AG04450 (cell line): ENCODE measurements at regions of chr5 and their contacts with region 1.

Region 1: DNA sequence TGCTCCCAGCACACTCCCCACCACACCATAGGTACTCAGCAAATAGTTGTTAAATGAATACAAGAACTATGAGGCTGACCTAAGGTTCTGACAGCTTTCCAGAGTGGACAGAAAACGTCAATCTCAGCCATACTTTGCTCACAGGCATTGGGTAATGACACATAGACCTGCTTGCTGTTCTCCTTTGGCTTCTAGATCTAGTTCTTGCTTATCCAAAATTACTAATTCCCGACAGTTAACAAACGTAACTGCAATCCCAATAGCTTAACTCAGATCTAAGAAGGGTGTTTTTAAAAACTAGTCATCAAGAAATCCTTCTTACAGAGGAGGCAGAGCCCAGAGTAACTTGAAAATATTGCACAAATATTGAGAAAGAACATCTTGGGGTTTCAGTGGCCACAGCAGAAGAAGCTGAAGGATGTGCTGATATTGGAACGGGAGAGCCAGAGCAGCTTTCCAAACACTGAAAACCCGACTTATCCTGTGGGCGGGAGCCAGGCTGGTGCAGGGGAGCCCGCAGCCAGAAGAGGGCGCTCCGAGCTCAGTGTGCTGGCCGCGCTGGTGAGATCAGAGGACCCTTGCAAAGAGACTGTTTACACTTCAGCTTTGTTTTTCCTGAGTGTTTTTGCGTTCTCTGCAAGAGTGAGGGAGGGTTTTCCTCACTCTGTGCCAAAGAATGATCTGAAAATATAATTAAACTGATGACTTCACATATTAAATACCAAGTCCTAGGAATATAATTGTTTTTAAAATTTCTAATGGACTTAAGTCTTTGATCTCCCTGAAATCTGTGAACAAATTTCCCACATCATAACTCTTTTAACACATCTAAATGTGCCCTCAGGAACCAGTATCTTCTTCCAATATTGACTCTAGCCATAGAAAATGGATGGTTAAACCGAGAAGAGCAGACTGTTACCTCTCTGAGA is 30.3 kb downstream of the FGF1 start:
- DNase-seq: peak; percentile 72
- H3K4me3 ChIP-seq: no peak overlapping the region
- H3K27ac ChIP-seq: no peak overlapping the region
- H3K27me3 ChIP-seq: no peaks in the 10 kb centered on the region
- CTCF ChIP-seq: peak; percentile 99

Region 2: DNA sequence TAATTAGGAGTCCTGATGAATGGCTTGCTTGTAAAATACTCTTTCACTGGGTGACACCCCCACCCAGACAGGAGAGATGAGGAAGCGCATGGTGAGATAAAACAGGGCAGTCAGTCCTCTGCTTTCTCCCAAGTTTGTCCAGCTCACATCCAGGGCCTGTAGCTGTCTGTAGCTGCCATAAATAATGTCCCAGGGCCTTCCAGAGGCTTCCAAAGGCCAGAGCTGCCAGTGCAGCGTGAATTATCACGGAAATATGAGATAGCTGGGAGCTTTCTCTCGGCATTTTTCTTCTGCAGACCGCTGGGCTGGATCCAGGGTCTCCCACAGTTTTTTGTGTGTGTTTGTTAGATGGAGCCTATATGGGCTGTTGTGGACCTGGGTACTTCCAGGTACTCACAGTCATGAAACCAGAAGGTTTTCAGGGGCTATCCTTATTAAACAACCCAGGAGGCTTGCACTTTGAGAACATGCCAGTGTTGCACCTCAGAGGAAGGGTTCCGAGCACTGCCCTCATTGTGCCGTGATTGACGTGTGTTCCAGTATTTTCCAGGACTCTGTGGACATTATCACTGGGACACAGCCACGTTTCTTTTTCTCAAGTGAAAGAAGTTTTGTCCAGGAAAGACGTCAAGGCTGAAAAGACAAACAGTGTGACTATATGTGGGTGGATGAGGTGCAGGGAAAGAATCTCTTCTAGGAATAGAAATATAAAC is 87.2 kb before region 1 on chr5:
- CTCF ChIA-PET with region 1: no interaction called
- POLR2A ChIA-PET with region 1: no interaction called
- DNase-seq: peak; percentile 21
- H3K4me3 ChIP-seq: no peak overlapping the region
- H3K27ac ChIP-seq: peak overlapping the region; percentile 68
- H3K27me3 ChIP-seq: no peaks in the 10 kb centered on the region
- CTCF ChIP-seq: no peak

Region 3: DNA sequence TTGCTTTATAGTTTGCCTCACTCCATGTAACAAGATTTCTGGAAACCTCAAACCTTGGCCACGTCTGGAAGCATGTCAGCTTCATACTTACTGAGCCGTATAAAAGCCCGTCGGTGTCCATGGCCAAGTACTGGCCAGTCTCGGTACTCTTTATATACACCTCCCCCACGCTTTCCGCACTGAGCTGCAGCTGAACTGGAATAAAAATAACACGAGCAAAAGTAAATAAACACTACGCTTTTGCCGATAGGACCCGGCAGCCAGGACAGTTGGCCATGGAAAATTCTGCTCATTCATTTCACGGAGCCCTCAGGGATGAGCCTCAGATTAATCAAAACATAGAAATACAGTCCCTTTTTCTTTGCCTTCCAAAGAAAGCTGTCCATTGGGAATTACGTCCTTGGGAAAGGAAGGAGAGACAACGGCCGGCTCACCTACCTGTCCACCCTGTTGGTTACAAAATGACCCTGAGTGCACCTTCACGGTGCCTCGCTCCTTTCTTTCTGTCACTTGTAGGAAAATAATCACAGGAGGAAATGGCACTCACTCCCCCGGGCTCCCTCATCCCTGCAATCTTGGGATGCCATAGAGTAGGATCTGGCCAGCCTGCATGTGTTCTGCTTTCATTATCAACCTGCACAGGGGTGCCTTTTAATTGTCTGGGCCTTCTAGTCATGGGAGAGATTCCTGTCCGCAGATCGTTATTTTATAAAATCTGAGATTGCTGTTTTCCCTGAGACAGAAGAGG is 54.8 kb before region 1 on chr5:
- CTCF ChIA-PET with region 1: interaction called, 15 read pairs
- POLR2A ChIA-PET with region 1: no interaction called
- DNase-seq: peak; percentile 69
- H3K4me3 ChIP-seq: peak overlapping the region; percentile 41
- H3K27ac ChIP-seq: peak overlapping the region; percentile 72
- H3K27me3 ChIP-seq: no peaks in the 10 kb centered on the region
- CTCF ChIP-seq: no peak

Region 4: DNA sequence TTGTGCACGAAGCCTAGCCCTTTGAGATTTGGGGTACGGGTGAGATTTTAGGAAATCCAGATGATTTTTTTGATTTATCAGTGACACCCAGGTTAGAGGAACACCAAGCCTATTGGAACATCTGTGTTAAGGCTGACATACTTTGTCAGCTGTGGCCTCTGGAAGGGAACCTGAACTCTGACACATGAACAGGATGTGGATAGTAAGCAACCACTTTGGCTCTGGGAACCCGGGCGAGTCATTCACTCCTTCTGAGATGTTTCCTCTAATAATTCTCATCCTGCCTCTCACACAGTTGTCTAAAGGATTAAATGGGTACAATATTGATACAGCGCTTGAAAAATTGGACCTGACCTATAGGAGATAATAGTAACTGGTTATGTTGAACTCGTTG is 37.5 kb before region 1 on chr5:
- CTCF ChIA-PET with region 1: interaction called, 18 read pairs
- POLR2A ChIA-PET with region 1: no interaction called
- DNase-seq: peak; percentile 43
- H3K4me3 ChIP-seq: no peak overlapping the region
- H3K27ac ChIP-seq: no peak overlapping the region
- H3K27me3 ChIP-seq: no peaks in the 10 kb centered on the region
- CTCF ChIP-seq: no peak

Region 5: GRCh38 chr5:142674531-142675469 is 19.2 kb after region 1 on chr5:
- CTCF ChIA-PET with region 1: interaction called, 57 read pairs
- POLR2A ChIA-PET with region 1: interaction called, 3 read pairs
- DNase-seq: peak; percentile 41
- H3K4me3 ChIP-seq: no peak overlapping the region
- H3K27ac ChIP-seq: peak overlapping the region; percentile 57
- H3K27me3 ChIP-seq: peaks cover 2% of the 10 kb centered on the region
- CTCF ChIP-seq: no peak

Region 6: GRCh38 chr5:142690667-142691066 is 35.1 kb after region 1 on chr5:
- CTCF ChIA-PET with region 1: interaction called, 36 read pairs
- POLR2A ChIA-PET with region 1: no interaction called
- DNase-seq: no peak
- H3K4me3 ChIP-seq: no peak overlapping the region
- H3K27ac ChIP-seq: no peak overlapping the region
- H3K27me3 ChIP-seq: no peaks in the 10 kb centered on the region
- CTCF ChIP-seq: no peak

Region 7: GRCh38 chr5:142881076-142881783 is 225.6 kb after region 1 on chr5:
- CTCF ChIA-PET with region 1: interaction called, 13 read pairs
- POLR2A ChIA-PET with region 1: no interaction called
- DNase-seq: peak; percentile 65
- H3K4me3 ChIP-seq: no peak overlapping the region
- H3K27ac ChIP-seq: no peak overlapping the region
- H3K27me3 ChIP-seq: peaks cover 4% of the 10 kb centered on the region
- CTCF ChIP-seq: no peak